ENCODE measurements at regions of chr2 and their contacts with region 1.

Region 1: GRCh38 chr2:200901459-200902072 is 12.4 kb downstream of the NIF3L1 start:
- DNase-seq: peak; percentile 66
- H3K4me3 ChIP-seq: no peak overlapping the region
- CTCF ChIP-seq: peak; percentile 67

Region 2: DNA sequence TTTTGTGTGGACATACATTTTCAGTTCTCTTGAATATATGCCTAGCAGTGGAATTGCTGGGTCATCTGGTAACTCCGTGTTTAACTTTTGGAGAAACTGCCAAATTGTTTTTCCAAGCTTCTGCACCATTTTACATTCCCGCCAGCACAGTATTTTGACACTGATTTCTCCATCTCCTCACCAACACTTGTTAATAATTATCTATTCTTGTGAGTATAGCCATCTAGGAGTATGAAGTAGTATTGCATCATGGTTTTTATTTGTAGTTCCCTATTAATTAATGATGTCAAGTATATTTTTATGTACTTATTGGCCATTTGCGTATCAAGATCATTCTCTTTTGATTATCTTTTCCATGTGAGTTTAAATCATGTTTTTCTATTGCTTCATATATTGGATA is 333.6 kb before region 1 on chr2:
- CTCF ChIA-PET with region 1: no interaction called
- POLR2A ChIA-PET with region 1: no interaction called
- DNase-seq: no peak
- H3K4me3 ChIP-seq: no peak overlapping the region
- CTCF ChIP-seq: no peak

Region 3: GRCh38 chr2:200888704-200889625 is 12.6 kb before region 1 on chr2 and contains the starts of genes NIF3L1 and PPIL3:
- CTCF ChIA-PET with region 1: interaction called, 11 read pairs
- POLR2A ChIA-PET with region 1: no interaction called
- DNase-seq: peak; percentile 77
- H3K4me3 ChIP-seq: peak within 1 kb of the TSS; percentile 72
- CTCF ChIP-seq: peak; percentile 3

Region 4: DNA sequence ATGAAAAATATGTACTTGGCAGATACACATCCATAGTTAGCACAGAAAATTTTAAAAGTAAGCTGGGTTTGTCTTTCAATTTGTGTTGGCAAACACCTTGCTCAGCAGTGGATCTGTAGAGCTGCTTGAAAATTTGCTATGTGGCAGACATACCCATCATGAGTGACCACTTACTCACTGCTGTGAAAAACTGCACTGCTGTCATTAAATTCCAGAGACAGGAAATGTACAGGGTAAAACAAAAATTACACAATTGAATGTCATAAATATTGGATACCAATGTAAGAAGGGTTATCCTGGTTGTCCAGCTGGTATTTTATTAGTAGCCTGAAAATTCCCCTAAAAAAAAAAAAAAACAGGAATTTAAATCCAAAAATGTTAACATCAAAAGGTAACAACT is 12.1 kb after region 1 on chr2:
- CTCF ChIA-PET with region 1: interaction called, 12 read pairs
- POLR2A ChIA-PET with region 1: no interaction called
- DNase-seq: peak; percentile 66
- H3K4me3 ChIP-seq: no peak overlapping the region
- CTCF ChIP-seq: no peak

Region 5: GRCh38 chr2:201182650-201183364 is 281.2 kb after region 1 on chr2 and contains the start of gene CASP10:
- CTCF ChIA-PET with region 1: interaction called, 160 read pairs
- POLR2A ChIA-PET with region 1: no interaction called
- DNase-seq: no peak
- H3K4me3 ChIP-seq: no peak within 1 kb of the TSS
- CTCF ChIP-seq: no peak

Region 6: GRCh38 chr2:201220102-201220570 is 318.6 kb after region 1 on chr2:
- CTCF ChIA-PET with region 1: interaction called, 12 read pairs
- POLR2A ChIA-PET with region 1: no interaction called
- DNase-seq: no peak
- H3K4me3 ChIP-seq: no peak overlapping the region
- CTCF ChIP-seq: no peak